T-cell (primary cell): ENCODE measurements at regions of chr17 and their contacts with region 1.

Region 1: DNA sequence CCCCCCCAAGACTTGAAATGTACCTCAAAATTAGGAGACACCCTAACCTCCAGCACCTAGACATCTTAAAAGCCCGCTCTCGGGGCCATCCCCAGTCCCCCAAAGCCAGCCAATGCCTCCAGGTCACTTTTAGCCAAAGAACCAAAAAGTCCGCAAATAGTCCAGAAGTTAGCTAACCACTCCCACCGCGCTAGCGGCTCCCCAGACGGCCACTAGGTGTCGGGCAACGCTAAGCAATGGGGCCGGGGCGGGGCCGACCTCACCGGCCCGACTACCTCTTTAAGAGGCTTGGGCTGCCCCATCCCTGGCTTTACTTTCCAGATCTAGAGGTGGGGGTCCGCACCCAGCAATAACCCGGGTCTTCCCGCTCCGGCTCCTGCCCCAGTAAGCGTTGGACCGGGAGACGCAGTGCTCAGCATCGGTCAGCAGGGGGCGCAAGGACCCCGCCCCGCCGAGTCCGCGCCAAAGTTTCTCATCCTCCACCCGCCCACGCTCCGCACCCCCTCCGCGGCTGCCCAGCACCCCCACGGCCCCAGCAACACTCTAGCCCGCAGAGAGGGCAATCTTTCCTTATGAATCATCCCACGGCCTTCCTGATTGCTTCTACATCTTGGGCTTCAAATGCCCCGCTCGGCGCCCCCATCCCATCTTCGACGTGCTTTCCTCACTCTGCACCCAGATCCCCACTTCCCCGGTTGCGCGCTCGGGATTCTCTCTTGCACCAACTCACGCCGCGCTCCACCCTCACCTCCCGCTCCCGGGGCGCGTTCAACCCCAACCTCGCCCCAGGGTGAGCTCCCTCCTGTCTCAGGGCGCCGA is 765 bp downstream of the COL1A1 start:
- DNase-seq: peak; percentile 48 to 86 (median 73)
- ATAC-seq: peak; percentile 56 to 84 (median 84)
- H3K4me3 ChIP-seq: peak overlapping the region; percentile 49 to 53
- H3K4me3 Mint-ChIP-seq: peak overlapping the region; percentile 68 to 86 (median 72)
- H3K27ac ChIP-seq: no peak overlapping the region
- H3K27ac Mint-ChIP-seq: peak overlapping the region in 1 of 2 donors; percentile 61
- H3K4me1 ChIP-seq: peaks cover 2 to 24% of the 10 kb centered on the region in 2 experiments
- H3K4me1 Mint-ChIP-seq: peaks cover 18 to 26% (median 22%) of the 10 kb centered on the region in 3 donors
- H3K27me3 ChIP-seq: peaks cover 2 to 69% of the 10 kb centered on the region in 2 experiments
- H3K27me3 Mint-ChIP-seq: peaks cover 42 to 60% of the 10 kb centered on the region in 2 donors

Region 2: DNA sequence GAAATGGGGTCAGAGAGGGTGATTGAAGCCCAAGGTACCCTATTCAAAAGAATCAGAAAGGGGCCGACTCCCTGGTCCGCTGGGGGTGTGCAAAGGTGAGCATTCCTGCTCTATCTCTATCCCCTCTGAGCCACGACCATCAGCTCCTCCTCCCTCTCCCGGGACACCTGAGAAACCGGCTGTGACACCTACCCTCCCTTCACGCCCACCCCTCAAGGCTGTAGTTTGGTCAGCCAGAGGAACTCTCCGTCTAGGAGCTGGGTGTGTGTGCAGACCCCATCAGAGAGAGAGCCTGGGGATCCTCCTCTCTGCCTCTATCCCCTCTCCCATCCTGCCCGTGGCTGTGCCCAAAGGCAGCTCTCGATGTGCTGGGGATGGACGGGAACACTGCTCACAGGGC is 259.2 kb before region 1 on chr17:
- CTCF ChIA-PET with region 1: interaction called in 1 of 2 experiments, 10 read pairs
- POLR2A ChIA-PET with region 1: no interaction called
- DNase-seq: no peak
- ATAC-seq: no peak
- H3K4me3 ChIP-seq: no peak overlapping the region
- H3K4me3 Mint-ChIP-seq: no peak overlapping the region
- H3K27ac ChIP-seq: no peak overlapping the region
- H3K27ac Mint-ChIP-seq: no peak overlapping the region
- H3K4me1 ChIP-seq: no peaks in the 10 kb centered on the region
- H3K4me1 Mint-ChIP-seq: no peaks in the 10 kb centered on the region
- H3K27me3 ChIP-seq: peaks cover 6 to 53% of the 10 kb centered on the region in 2 experiments
- H3K27me3 Mint-ChIP-seq: peaks cover 28 to 51% of the 10 kb centered on the region in 2 donors

Region 3: GRCh38 chr17:50055426-50056230 is 145.0 kb before region 1 on chr17 and contains the start of gene ITGA3:
- CTCF ChIA-PET with region 1: interaction called in 1 of 2 experiments, 16 read pairs
- POLR2A ChIA-PET with region 1: no interaction called
- DNase-seq: peak in 32 of 35 experiments; percentile 12 to 69 (median 33)
- ATAC-seq: peak; percentile 64 to 77 (median 74)
- H3K4me3 ChIP-seq: peak within 1 kb of the TSS; percentile 63 to 68
- H3K4me3 Mint-ChIP-seq: peak within 1 kb of the TSS; percentile 87 to 94 (median 89)
- H3K27ac ChIP-seq: no peak within 1 kb of the TSS
- H3K27ac Mint-ChIP-seq: peak within 1 kb of the TSS; percentile 59 to 86
- H3K4me1 ChIP-seq: peaks cover 4 to 30% of the 10 kb centered on the region in 2 experiments
- H3K4me1 Mint-ChIP-seq: peaks cover 24 to 32% (median 27%) of the 10 kb centered on the region in 3 donors
- H3K27me3 ChIP-seq: peaks cover 0 to 23% of the 10 kb centered on the region in 2 experiments
- H3K27me3 Mint-ChIP-seq: peaks cover 0 to 6% of the 10 kb centered on the region in 2 donors
- total RNA-seq, gene ITGA3: 8.5 to 20.0 (median 14.8) TPM

Region 4: DNA sequence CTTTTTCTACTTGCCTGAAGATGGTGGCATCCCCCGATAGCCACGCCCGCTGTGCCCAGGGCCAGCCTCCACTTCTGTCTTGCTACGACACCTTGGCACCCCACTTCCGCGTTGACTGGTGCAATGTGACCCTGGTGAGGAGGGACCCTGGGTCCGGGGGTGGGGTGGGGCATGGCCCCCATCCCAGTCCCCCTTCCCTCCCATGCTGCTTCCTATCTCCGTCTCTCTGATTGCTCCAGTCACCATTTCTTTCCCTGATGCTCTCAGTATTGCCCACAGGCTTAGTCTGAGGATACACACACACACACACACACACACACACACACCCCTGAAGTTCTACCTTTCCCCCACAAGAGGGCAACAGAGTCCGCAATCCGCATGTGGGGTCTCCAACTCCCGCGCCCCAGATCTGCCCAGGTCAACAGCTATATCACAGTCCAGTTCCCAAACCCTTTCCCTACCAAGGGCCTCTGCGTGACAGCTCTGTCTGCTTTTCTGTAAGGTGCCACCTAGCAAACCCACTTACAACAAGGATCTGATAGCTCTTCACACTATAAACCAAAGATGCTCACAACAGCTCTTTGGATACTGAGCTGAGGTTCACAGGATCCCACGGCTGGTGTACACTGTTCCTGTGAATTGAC is 31.4 kb before region 1 on chr17:
- CTCF ChIA-PET with region 1: interaction called, 3 to 10 read pairs
- POLR2A ChIA-PET with region 1: interaction called, 3 read pairs
- DNase-seq: peak; percentile 41 to 76 (median 65)
- ATAC-seq: peak; percentile 79 to 89 (median 84)
- H3K4me3 ChIP-seq: peak overlapping the region in 1 of 2 donors; percentile 40
- H3K4me3 Mint-ChIP-seq: peak overlapping the region; percentile 54 to 70 (median 56)
- H3K27ac ChIP-seq: peak overlapping the region; percentile 56
- H3K27ac Mint-ChIP-seq: peak overlapping the region; percentile 73 to 88
- H3K4me1 ChIP-seq: peaks cover 0 to 18% of the 10 kb centered on the region in 2 experiments
- H3K4me1 Mint-ChIP-seq: peaks cover 12 to 14% (median 13%) of the 10 kb centered on the region in 3 donors
- H3K27me3 ChIP-seq: peaks cover 0 to 24% of the 10 kb centered on the region in 2 experiments
- H3K27me3 Mint-ChIP-seq: no peaks in the 10 kb centered on the region

Region 5: DNA sequence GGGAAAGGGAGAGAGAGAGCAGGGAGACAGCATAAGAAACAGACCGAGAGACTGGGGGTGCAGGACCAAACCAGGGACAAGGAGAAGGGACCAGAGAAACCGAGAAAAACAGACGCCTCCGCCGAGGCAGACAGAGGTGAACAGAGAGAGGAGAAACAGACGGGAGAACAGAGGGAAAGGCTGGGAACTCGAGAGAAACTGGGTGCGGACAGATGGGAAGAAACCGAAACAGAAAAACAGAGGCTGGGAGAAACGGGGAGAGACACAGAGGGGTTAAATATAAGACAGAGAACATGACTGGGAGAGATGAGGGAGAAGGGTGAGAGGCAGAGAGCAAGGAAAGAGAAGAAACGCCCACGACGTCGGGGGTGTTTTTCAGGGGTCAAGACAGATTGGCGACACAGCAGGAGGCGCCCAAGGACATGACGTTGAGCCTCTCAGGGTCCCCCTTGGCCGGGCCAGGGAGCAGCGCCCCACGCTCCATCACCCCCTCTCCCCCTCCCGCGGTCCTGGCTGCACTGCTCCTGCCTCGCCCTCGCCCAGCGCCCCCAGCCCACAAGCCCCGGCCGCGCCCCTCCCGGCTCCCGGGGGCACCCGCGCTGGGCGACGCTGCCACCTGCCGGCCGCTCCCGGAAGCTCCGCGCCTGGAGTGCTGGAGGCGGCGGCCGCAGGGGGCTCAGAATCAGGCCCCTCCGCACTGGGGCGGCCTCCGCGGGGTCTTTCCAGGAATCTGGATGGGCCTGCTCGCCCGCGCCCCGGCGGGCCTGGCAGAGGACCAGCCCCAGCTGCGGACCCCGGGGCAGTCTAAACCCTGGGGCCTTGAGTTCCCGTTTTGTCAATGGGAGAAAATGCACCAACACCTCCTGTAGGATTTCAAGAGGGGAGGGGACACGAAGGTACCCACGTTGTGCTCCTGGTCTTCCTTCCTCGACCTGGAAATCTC is 72.3 kb after region 1 on chr17:
- CTCF ChIA-PET with region 1: interaction called, 3 to 13 read pairs
- POLR2A ChIA-PET with region 1: no interaction called
- DNase-seq: peak in 30 of 35 experiments; percentile 8 to 68 (median 38)
- ATAC-seq: peak; percentile 64 to 77 (median 75)
- H3K4me3 ChIP-seq: peak overlapping the region in 1 of 2 donors; percentile 37
- H3K4me3 Mint-ChIP-seq: peak overlapping the region; percentile 66 to 83 (median 71)
- H3K27ac ChIP-seq: no peak overlapping the region
- H3K27ac Mint-ChIP-seq: no peak overlapping the region
- H3K4me1 ChIP-seq: peaks cover 0 to 13% of the 10 kb centered on the region in 2 experiments
- H3K4me1 Mint-ChIP-seq: peaks cover 7 to 9% (median 7%) of the 10 kb centered on the region in 3 donors
- H3K27me3 ChIP-seq: peaks cover 0 to 55% of the 10 kb centered on the region in 2 experiments
- H3K27me3 Mint-ChIP-seq: peaks cover 34 to 41% of the 10 kb centered on the region in 2 donors

Region 6: DNA sequence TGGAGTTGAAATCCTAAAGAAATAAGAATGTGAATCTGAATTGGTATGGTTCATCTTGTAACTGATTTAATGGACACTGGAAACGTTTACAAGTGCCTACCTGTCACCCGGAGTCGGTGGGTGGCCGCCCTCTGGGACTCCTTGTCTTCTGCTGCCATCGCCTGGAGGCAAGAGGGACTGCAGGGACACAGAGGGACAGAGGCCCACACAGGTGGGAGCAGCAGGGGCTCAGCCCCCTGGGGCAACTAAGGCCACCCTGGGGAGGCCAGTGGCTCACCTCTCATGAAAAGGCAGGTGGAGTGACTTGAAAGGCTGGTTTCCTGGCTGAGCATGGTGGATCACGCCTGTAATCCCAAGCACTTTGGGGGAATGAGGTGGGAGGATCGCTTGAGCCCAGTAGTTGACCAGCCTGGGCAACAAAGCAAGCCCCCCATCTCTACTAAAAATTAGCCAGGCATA is 96.8 kb after region 1 on chr17:
- CTCF ChIA-PET with region 1: interaction called, 6 to 17 read pairs
- POLR2A ChIA-PET with region 1: no interaction called
- DNase-seq: peak; percentile 48 to 83 (median 71)
- ATAC-seq: peak; percentile 86 to 99 (median 94)
- H3K4me3 ChIP-seq: no peak overlapping the region
- H3K4me3 Mint-ChIP-seq: no peak overlapping the region
- H3K27ac ChIP-seq: no peak overlapping the region
- H3K27ac Mint-ChIP-seq: no peak overlapping the region
- H3K4me1 ChIP-seq: no peaks in the 10 kb centered on the region
- H3K4me1 Mint-ChIP-seq: no peaks in the 10 kb centered on the region
- H3K27me3 ChIP-seq: peaks cover 0 to 18% of the 10 kb centered on the region in 2 experiments
- H3K27me3 Mint-ChIP-seq: peaks cover 5 to 12% of the 10 kb centered on the region in 2 donors